ENCODE measurements at regions of chr18 and their contacts with region 1.

Region 1: DNA sequence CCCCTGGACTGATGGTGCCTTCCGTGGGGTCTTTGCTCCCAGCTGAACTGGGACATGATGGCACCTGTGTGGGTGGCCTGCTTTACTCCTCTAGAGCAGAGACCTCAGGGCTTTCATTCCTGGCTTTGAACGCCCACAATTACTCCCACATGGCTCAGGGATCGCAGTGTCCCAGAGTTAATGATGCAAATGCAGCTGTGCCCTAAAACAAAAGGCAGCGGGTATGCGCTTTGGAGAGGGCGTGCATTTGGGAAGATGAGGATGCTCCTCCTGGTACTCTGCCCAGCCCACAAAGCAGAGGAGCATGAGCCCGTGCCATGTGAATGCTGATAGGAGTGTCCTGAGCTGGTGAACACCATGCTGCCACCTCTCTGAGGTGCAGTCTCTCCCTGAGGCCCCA is 173.4 kb downstream of the FHOD3 start:
- DNase-seq: no peak
- ATAC-seq: peak; percentile 24

Region 2: DNA sequence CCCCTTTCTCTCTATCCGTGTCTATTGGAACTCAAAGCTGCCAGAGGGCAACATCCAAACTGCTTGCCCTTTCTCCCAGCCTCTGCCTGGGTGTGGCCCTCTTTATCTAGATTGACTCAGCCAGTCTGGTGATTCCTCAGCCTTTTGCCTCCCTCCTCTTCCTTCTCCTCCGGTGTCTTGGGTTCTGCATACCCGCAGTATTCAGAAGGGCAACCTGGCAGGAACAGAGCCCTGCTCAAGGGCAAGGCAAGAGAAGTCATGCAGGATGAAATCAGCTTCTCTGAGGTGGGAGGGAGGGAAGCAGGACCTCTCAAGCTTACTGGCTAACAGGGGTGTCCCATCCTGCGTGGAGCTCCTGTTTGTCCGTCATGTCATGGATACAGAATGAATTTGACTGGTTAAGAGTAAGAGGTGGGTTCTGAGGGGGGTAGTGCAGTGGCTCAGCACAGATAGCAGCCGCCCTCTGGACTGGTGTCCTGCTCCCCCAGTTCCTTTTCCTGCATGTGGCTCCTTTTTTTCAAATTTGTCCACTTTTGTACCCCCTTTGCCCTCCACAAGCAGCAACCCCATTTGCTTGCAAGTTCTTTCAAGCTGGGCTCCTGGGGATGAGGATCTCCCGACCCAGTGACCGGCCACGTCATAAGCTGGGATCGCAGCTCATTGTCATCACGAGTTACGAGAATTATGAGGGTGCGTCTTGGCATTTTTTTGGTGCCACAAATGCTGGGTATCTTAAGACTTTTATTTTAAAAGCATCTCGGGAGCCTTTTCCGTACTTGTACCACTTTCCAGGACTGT is 19.2 kb before region 1 on chr18:
- intact Hi-C with region 1: loop called (anchors 1 kb)
- DNase-seq: no peak
- ATAC-seq: no peak

Region 3: GRCh38 chr18:36499938-36500337 is 29.0 kb after region 1 on chr18:
- intact Hi-C with region 1: no loop called
- DNase-seq: no peak
- ATAC-seq: no peak

Region 4: DNA sequence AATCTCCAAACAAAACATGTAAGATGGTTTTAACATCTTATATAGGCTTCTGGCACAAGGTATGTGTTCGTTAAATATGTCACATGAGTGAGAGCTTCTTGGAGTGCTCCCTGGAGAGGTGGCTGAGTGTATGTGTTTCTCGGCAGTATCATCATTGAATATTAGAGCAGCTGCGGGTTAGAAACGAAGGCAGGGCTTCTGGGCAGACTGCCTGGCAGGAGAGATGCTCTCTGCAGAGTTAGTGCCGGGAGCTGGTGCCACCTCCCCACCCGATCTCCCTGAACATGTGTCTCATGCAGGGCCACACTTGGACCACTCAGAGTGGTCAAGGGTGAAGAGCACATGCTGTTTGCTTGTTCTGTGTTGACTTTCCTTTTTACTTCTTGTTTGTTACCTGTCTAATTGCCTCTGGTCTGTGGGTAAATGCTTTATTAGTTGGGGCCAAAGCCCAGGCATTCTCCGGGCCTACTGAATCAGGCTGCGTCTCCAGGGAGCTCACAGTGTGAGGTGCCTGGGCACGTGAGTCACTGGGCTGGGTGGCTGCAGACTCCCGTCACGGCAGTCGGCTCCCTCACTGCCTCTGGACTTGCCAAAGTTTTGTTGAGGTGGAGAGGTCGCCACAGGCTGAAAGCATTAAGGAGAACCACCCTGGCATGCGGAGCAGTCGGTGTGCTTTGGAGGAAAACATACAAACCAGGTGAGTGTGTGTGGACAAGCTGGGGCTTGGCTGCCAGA is 73.3 kb after region 1 on chr18:
- intact Hi-C with region 1: no loop called
- DNase-seq: no peak
- ATAC-seq: no peak